Transverse colon (tissue), 4 donors: ENCODE measurements at regions of chr17 and their contacts with region 1.

Region 1: DNA sequence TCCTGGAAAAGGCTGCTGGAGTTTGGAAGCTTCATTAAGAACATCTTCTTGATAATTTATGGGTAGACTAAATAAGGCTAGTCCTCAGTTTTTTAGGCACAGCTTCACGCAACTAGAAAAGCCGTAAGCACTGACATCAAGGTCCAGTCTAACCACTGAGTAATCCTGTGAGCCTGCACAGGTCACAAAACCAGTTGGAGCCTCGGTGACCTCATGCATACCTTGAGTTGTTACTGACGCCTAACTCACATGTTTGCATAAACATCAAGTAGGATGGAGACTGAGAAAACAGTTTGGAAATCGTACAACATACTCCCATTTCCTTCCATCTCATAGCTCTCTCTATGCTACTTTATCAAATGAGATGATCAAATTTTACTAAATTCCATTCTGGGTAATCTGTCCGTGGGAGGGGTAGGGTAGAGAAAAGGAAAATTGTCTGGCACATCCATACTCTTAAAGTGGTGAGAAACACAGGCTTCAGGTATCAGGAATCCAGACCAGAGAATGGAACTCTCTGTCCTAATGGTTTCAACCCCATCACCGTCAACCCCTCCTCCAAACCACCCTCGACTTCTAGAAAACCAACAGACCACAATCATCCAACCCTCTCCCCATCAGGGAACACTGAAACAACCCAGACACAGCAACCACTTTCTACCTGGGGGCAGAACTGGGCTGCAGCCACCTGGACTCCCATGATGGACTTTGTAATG is 64.0 kb upstream of the RCVRN start:
- DNase-seq: no peak
- H3K4me3 ChIP-seq: no peak overlapping the region
- H3K27ac ChIP-seq: no peak overlapping the region
- H3K4me1 ChIP-seq: peaks cover 0 to 8% (median 2%) of the 10 kb centered on the region in 4 donors
- H3K27me3 ChIP-seq: no peaks in the 10 kb centered on the region
- CTCF ChIP-seq: no peak
- EP300 ChIP-seq: no peak
- POLR2A ChIP-seq: no peak

Region 2: GRCh38 chr17:10233161-10233560 is 264.1 kb after region 1 on chr17:
- in situ Hi-C with region 1: loop called in 3 of 4 experiments (anchors 5 to 10 kb)
- intact Hi-C with region 1: no loop called
- DNase-seq: no peak
- H3K4me3 ChIP-seq: no peak overlapping the region
- H3K27ac ChIP-seq: no peak overlapping the region
- H3K4me1 ChIP-seq: no peaks in the 10 kb centered on the region
- H3K27me3 ChIP-seq: no peaks in the 10 kb centered on the region
- CTCF ChIP-seq: no peak
- EP300 ChIP-seq: no peak
- POLR2A ChIP-seq: no peak